Left cardiac atrium (tissue), 4 donors: ENCODE measurements at regions of chrX and their contacts with region 1.

Region 1: GRCh38 chrX:30713061-30713525 is 59.9 kb downstream of the GK start:
- DNase-seq: peak; percentile 25
- ATAC-seq: peak; percentile 39 to 44

Region 2: GRCh38 chrX:30570505-30570904 is 142.6 kb before region 1 on chrX:
- intact Hi-C with region 1: loop called in 1 of 2 experiments (anchors 5 kb)
- DNase-seq: no peak
- ATAC-seq: no peak

Region 3: GRCh38 chrX:30781711-30782444 is 68.8 kb after region 1 on chrX:
- intact Hi-C with region 1: no loop called
- DNase-seq: no peak
- ATAC-seq: no peak

Region 4: GRCh38 chrX:30935985-30936384 is 222.9 kb after region 1 on chrX:
- intact Hi-C with region 1: no loop called
- DNase-seq: no peak
- ATAC-seq: no peak